AG04450 (cell line): ENCODE measurements at regions of chr10 and their contacts with region 1.

Region 1: DNA sequence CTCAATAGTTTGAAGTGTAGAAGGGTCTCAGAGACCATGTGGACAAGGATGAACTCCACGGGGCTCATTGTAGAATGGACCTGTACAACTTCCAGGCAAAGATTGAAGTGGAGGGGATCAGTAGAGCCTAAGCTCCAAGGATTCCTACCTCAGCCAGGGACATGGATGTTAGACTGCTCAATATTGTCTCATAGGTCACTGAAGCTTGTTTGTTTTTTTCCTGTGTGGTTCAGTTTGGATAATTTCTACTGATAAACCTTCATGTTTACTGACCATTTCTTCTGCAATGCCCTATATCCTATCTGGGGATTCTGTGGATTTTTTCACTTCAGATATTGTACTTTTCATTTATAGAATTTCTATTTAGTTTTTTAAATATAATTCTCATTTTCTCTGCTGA is 8.9 kb downstream of the DYDC2 start:
- DNase-seq: no peak
- H3K4me3 ChIP-seq: no peak overlapping the region
- H3K27ac ChIP-seq: no peak overlapping the region
- H3K27me3 ChIP-seq: no peaks in the 10 kb centered on the region
- CTCF ChIP-seq: no peak

Region 2: DNA sequence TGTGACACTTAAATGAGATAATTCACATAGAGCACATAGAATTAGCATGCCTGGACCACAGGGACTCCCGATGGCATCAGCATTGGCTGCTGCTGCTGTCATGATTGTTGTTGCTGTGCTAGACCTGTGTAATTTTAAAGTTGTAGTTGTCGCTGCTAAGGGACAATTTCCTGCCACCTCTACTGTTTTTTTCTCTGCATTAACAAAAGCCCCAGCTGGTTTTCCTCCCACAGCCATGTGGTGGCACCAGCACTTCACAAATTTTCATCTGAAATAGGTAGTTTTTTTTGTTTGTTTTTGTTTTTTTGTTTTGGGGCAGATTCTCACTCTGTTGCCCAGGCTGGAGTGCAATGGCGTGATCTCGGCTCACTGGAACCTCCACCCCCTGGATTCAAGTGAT is 17.5 kb after region 1 on chr10:
- CTCF ChIA-PET with region 1: interaction called, 16 read pairs
- POLR2A ChIA-PET with region 1: no interaction called
- DNase-seq: no peak
- H3K4me3 ChIP-seq: no peak overlapping the region
- H3K27ac ChIP-seq: no peak overlapping the region
- H3K27me3 ChIP-seq: peaks cover 3% of the 10 kb centered on the region
- CTCF ChIP-seq: peak; percentile 60